ENCODE measurements at regions of chr17 and their contacts with region 1.

Region 1: DNA sequence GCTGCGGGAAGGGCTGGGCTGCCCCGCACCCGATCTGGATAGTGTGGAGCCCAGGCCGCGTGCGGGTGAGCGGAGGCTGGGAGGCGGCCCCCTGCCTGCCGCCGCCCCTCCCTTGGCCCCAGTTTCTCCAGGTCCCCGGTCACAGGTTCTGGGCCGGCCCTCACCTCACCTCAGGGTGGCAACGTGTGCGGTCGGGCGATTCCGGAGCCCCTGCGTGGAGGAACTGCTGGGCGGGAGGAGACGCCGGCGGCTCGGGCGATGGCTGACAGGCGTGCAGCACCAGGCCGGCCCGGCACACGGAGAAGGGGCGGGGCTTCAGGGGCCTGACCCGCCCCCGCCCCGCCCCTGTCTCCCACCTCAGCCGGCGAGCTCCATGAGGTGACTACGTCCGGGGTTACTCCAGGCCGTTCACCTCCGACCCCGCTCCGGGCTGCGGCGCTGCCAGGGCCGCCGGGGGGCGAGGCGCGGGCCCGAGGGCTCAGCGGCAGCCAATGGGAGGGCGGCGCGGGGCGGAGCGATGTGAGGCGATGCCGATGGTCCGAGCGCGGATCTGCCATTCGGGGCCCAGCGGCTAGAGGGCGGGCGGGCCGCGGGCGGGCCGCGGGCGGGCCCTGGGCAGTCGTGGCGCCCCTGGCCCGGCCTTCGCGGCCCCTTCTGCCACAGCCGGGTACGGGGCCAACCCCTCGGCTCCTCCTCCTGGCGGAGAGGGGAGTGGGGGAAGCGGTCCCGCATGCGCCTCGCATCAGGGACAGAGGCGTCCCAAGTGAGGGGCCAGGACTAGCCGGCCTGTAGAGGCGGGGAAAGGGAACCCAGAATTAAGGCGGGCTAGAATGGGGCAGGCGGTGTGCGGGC is 16.7 kb upstream of the C17orf78 start:
- DNase-seq: peak; percentile 93 to 97 (median 96)
- ATAC-seq: peak; percentile 93 to 98 (median 96)
- H3K4me3 ChIP-seq: peak overlapping the region; percentile 37 to 92 (median 70)
- H3K27ac ChIP-seq: peak overlapping the region; percentile 22 to 94 (median 85)
- H3K4me1 ChIP-seq: peaks cover 0 to 25% (median 11%) of the 10 kb centered on the region in 12 donors
- H3K27me3 ChIP-seq: no peaks in the 10 kb centered on the region
- CTCF ChIP-seq: peak in 11 of 12 donors; percentile 7 to 69 (median 50)
- POLR2A ChIP-seq: peak in 1 of 2 donors; percentile 74

Region 2: GRCh38 chr17:36510636-36511035 is 848.4 kb before region 1 on chr17:
- intact Hi-C with region 1: loop called in 1 of 10 experiments (anchors 10 kb)
- DNase-seq: no peak
- ATAC-seq: no peak
- H3K4me3 ChIP-seq: no peak overlapping the region
- H3K27ac ChIP-seq: no peak overlapping the region
- H3K4me1 ChIP-seq: peaks cover 0 to 6% (median 0%) of the 10 kb centered on the region in 12 donors
- H3K27me3 ChIP-seq: no peaks in the 10 kb centered on the region
- CTCF ChIP-seq: no peak
- POLR2A ChIP-seq: no peak

Region 3: DNA sequence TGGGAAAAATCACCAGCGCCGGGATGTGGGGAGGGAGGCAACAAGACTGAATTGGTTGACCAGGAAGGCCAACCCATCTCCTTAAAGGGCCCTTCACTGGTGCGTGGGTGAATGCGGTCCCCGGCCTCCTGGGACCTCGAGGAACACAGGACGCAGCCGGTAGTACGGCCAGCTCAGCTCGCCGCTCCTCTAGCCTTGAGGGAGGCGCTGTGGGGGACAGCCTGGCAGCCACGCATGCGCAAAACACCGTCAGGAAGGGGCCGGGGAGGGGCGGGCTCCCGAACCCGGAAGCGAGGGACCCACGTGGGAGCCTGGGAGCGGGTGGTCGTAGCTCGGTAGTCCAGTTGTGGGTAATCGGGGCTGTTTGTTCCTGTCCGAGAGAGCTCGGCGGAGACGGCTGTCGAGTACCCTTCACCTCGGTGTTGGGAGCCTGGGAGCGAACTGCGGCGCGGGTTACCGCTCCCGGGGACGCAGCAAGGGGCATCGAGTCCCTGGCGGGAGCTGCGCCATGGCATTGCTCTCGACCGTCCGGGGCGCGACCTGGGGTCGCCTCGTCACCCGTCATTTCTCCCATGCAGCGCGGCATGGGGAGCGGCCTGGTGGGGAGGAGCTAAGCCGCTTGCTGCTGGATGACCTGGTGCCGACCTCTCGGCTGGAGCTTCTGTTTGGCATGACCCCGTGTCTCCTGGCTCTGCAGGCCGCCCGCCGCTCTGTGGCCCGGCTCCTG is 757.6 kb before region 1 on chr17 and contains the start of gene MRM1:
- intact Hi-C with region 1: loop called in 1 of 10 experiments (anchors 5 kb)
- DNase-seq: peak; percentile 94 to 97 (median 95)
- ATAC-seq: peak; percentile 93 to 98 (median 94)
- H3K4me3 ChIP-seq: peak within 1 kb of the TSS; percentile 51 to 98 (median 77)
- H3K27ac ChIP-seq: peak within 1 kb of the TSS; percentile 14 to 87 (median 79)
- H3K4me1 ChIP-seq: peaks cover 0 to 30% (median 18%) of the 10 kb centered on the region in 12 donors
- H3K27me3 ChIP-seq: no peaks in the 10 kb centered on the region
- CTCF ChIP-seq: peak in 4 of 12 donors; percentile 5 to 28 (median 22)
- POLR2A ChIP-seq: peak in 1 of 2 donors; percentile 85
- total RNA-seq, gene MRM1: 4.0 to 12.4 (median 7.2) TPM

Region 4: DNA sequence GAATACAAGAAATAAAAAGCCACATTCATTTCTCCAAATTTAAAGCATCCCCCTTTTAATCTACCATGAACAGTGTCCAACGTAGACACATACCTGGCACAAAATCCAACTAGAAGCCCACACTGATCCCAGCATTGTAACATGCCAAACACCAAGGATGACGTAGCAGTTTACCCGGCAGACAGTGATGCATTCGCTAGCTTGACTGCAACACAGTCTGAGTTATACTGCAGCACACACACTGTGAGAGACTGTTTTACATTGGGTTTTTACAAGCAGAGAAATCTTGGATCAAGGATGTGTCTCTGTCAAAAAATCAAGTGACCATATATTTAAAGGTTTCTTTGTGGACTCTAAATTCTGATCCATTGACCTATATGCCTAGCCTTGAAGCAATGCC is 57.8 kb before region 1 on chr17:
- intact Hi-C with region 1: loop called in 1 of 10 experiments (anchors 10 kb)
- DNase-seq: no peak
- ATAC-seq: peak; percentile 35 to 86 (median 82)
- H3K4me3 ChIP-seq: peak overlapping the region in 5 of 12 donors; percentile 5 to 24 (median 19)
- H3K27ac ChIP-seq: peak overlapping the region in 5 of 12 donors; percentile 3 to 58 (median 50)
- H3K4me1 ChIP-seq: peaks cover 3 to 34% (median 19%) of the 10 kb centered on the region in 12 donors
- H3K27me3 ChIP-seq: no peaks in the 10 kb centered on the region
- CTCF ChIP-seq: no peak
- POLR2A ChIP-seq: no peak

Region 5: DNA sequence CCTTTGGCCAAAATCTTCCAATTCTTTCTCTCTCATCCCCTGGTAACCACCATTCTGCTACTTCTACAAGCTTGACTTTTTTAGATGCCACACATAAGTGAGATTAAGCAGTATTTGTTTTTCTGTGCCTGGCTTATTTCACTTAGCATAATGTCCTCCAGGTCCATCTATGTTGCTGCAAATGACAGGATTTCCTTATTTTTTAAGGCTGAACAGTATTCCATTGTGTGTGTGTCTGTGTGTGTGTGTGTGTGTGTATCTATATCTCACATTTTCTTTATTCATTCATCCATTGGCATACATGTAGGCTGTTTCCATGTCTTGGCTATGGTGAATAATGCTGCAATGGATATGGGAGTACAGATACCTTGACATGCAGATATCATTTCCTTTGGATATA is 41.4 kb after region 1 on chr17:
- intact Hi-C with region 1: loop called in 4 of 10 experiments (anchors 1 to 5 kb)
- DNase-seq: no peak
- ATAC-seq: no peak
- H3K4me3 ChIP-seq: no peak overlapping the region
- H3K27ac ChIP-seq: no peak overlapping the region
- H3K4me1 ChIP-seq: peaks cover 0 to 16% (median 2%) of the 10 kb centered on the region in 12 donors
- H3K27me3 ChIP-seq: no peaks in the 10 kb centered on the region
- CTCF ChIP-seq: no peak
- POLR2A ChIP-seq: no peak

Region 6: DNA sequence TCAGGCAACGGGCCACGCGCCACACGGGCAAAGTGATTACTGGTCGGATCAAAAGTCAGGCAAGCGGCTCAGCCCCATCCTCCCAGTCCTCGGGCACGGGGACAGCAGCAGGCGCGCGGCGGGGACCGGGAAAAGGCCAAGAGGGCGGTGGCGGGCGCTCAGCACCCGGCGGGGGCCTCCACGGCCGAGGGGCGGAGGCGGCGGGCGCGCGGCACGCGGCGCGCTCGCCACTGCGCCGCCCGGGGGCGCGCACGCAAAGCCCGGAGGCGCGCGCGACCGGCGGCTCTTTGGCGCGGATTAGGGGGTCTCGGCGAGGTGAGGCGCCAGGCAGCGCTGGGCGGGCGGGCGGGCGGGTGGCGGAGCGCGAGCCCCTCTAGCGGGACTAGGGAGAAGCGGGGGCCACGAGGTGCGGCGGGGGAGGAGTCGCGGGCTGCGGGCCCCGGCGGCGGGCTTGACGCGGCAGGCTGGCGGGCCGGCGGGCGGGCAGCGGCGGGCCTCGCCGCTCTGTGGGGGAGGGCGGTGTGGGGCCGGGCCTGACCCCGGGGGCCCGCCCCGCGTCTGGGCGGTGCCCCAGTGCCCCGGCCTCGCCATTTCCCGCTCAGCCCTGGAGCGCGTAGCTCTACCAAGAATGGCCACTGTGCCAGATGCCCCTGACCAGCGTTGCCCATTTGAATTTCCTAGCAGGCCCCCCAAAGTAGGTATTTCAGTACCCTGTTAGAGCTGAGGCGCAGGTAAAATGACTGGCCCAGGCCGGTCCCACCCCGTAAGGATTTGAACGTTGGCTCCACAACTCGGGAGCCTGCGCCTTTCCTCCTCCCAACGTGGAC is 47.8 kb after region 1 on chr17 and contains the starts of genes ACACA and TADA2A:
- intact Hi-C with region 1: loop called in 5 of 10 experiments (anchors 1 to 5 kb)
- DNase-seq: peak; percentile 81 to 90 (median 86)
- ATAC-seq: peak; percentile 93 to 98 (median 97)
- H3K4me3 ChIP-seq: peak within 1 kb of the TSS; percentile 60 to 96 (median 84)
- H3K27ac ChIP-seq: peak within 1 kb of the TSS; percentile 74 to 98 (median 94)
- H3K4me1 ChIP-seq: peaks cover 0 to 29% (median 12%) of the 10 kb centered on the region in 12 donors
- H3K27me3 ChIP-seq: no peaks in the 10 kb centered on the region
- CTCF ChIP-seq: no peak
- POLR2A ChIP-seq: peak in 1 of 2 donors; percentile 61
- total RNA-seq, gene ACACA: 14.0 to 33.0 (median 16.1) TPM
- total RNA-seq, gene TADA2A: 9.6 to 19.4 (median 13.2) TPM

Measured in heart left ventricle (tissue), 16 donors.